ENCODE measurements at regions of chr20 and their contacts with region 1.

Region 1: GRCh38 chr20:19784511-19785172 is 26.6 kb downstream of the RIN2 start:
- DNase-seq: peak; percentile 42
- H3K4me3 Mint-ChIP-seq: no peak overlapping the region
- H3K27ac Mint-ChIP-seq: no peak overlapping the region
- H3K4me1 Mint-ChIP-seq: no peaks in the 10 kb centered on the region
- H3K27me3 Mint-ChIP-seq: peaks cover 10% of the 10 kb centered on the region

Region 2: GRCh38 chr20:19692685-19693119 is 91.9 kb before region 1 on chr20:
- CTCF ChIA-PET with region 1: no interaction called
- intact Hi-C with region 1: loop called (anchors 5 kb)
- DNase-seq: peak; percentile 64
- H3K4me3 Mint-ChIP-seq: no peak overlapping the region
- H3K27ac Mint-ChIP-seq: no peak overlapping the region
- H3K4me1 Mint-ChIP-seq: peaks cover 2% of the 10 kb centered on the region
- H3K27me3 Mint-ChIP-seq: peaks cover 26% of the 10 kb centered on the region

Region 3: DNA sequence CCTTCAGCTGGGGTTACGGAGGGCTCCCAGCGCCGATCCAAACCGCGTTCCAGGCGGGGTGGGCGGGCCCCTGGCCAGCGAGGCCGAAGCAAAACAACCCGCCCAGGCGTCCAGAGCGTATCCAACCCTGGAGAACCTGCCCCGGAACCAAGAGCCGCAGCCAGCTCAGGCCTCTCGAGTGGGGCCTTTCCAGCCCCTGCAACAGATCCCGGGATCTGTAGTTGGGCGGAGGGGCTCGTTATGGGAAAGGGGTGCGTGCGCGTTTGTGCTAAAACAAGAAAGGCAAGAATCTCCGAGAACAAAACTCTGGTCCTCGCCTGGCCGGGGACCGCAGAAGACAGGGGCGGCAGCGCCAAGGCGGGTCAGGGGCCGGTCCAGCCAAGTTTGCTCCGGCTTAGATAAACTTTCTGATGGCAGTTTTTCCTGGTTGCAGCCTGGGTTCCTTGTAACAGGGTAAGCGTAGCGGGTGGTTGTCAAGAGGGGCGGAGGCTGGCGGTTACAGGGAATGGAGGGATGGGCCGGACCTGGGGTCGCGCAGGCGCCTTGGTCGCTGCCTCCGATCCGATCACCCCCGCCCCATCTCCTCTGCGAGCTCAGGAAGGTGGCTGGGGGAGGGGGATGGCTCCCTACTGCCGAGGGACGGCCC is 27.0 kb before region 1 on chr20:
- CTCF ChIA-PET with region 1: no interaction called
- intact Hi-C with region 1: no loop called
- DNase-seq: peak; percentile 39
- H3K4me3 Mint-ChIP-seq: no peak overlapping the region
- H3K27ac Mint-ChIP-seq: no peak overlapping the region
- H3K4me1 Mint-ChIP-seq: no peaks in the 10 kb centered on the region
- H3K27me3 Mint-ChIP-seq: peaks cover 32% of the 10 kb centered on the region